Activated T-helper 2 cell treated with anti-CD3 and anti-CD28 coated beads, Interferon-gamma antibody, Interleukin-2, Interleukin-4, amounts not matched to agents 10 μg/mL and 5 μg/mL and 100 μg/mL, durations not matched to agents 14 hours and 24 hours and 36 hours (primary cell): ENCODE measurements at regions of chr6 and their contacts with region 1.

Region 1: GRCh38 chr6:73610444-73611275 is 43.1 kb downstream of the SLC17A5 start:
- DNase-seq: no peak
- H3K4me3 Mint-ChIP-seq: no peak overlapping the region
- H3K27ac Mint-ChIP-seq: no peak overlapping the region
- H3K4me1 Mint-ChIP-seq: no peaks in the 10 kb centered on the region
- H3K27me3 Mint-ChIP-seq: no peaks in the 10 kb centered on the region

Region 2: DNA sequence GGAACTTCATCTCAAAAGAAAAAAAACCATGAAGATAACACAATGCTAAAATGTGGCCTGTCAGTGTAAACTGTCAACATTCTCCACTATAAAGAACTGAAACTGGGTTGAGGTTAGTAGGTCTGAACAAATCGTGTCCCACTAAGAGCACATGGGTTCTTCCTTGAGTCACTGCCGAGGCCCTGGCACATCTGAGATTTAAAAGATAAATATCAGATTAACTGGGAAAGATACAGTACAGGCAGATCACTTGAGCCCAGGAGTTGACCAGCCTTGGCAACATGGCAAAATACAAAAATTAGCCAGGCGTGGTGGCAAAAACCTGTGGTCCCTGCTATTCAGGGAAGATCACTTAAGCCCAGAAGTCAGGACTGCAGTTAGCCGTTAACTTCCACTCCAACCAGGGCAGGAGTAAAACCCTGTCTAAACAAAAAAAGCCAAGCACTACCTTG is 95.4 kb before region 1 on chr6:
- intact Hi-C with region 1: loop called (anchors 1 kb)
- DNase-seq: no peak
- H3K4me3 Mint-ChIP-seq: peak overlapping the region; percentile 74
- H3K27ac Mint-ChIP-seq: peak overlapping the region; percentile 87
- H3K4me1 Mint-ChIP-seq: peaks cover 32% of the 10 kb centered on the region
- H3K27me3 Mint-ChIP-seq: no peaks in the 10 kb centered on the region

Region 3: GRCh38 chr6:73665686-73666319 is 55.1 kb after region 1 on chr6:
- intact Hi-C with region 1: no loop called
- DNase-seq: no peak
- H3K4me3 Mint-ChIP-seq: no peak overlapping the region
- H3K27ac Mint-ChIP-seq: peak overlapping the region; percentile 18
- H3K4me1 Mint-ChIP-seq: peaks cover 35% of the 10 kb centered on the region
- H3K27me3 Mint-ChIP-seq: peaks cover 10% of the 10 kb centered on the region

Region 4: DNA sequence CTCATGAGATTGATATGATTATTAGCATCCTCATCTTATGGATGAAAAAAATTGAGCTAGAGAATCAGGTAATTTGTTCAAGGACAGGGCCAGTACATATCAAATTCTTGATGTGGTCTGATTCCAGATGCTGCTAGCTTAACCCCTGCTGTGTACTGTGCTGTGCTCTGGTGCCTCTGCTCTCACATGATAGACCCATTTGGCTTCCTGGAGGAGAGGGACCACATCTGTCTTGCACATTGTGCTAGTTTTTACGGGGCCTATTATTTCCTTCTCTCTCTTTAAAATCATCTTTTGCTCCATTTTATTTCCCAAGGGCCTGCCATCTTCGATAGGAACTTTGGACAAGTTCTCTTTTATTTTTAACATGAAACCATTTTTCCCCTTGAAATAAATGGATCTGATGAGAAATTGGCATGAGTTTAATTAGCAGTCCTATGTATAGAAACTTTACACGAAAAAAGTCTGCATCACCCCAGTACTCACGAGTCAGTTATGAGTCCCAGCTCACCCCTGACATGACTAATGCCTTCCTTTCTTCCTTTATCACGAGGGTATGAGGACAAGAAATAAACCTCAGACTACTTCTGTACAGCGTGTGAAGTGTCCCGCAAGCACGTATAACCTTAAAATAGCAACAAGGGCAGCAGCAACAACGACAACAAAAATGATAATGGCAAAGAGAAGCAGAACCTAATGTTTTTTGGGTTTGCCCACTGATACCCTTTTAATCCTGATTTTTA is 111.8 kb after region 1 on chr6:
- intact Hi-C with region 1: no loop called
- DNase-seq: no peak
- H3K4me3 Mint-ChIP-seq: peak overlapping the region; percentile 24
- H3K27ac Mint-ChIP-seq: peak overlapping the region; percentile 73
- H3K4me1 Mint-ChIP-seq: peaks cover 48% of the 10 kb centered on the region
- H3K27me3 Mint-ChIP-seq: no peaks in the 10 kb centered on the region